Heart left ventricle (tissue), 16 donors: ENCODE measurements at regions of chr9 and their contacts with region 1.

Region 1: GRCh38 chr9:1071730-1072129 is 21.6 kb downstream of the DMRT2 start:
- DNase-seq: no peak
- ATAC-seq: no peak
- H3K4me3 ChIP-seq: no peak overlapping the region
- H3K27ac ChIP-seq: no peak overlapping the region
- H3K4me1 ChIP-seq: no peaks in the 10 kb centered on the region
- H3K27me3 ChIP-seq: peaks cover 0 to 4% (median 0%) of the 10 kb centered on the region in 9 donors
- CTCF ChIP-seq: no peak
- POLR2A ChIP-seq: no peak

Region 2: GRCh38 chr9:1083325-1083913 is 11.7 kb after region 1 on chr9:
- intact Hi-C with region 1: loop called in 1 of 10 experiments (anchors 1 kb)
- DNase-seq: peak in 4 of 5 donors; percentile 18 to 68 (median 26)
- ATAC-seq: peak in 2 of 4 donors; percentile 72 to 76
- H3K4me3 ChIP-seq: peak overlapping the region in 9 of 12 donors; percentile 17 to 49 (median 36)
- H3K27ac ChIP-seq: no peak overlapping the region
- H3K4me1 ChIP-seq: no peaks in the 10 kb centered on the region
- H3K27me3 ChIP-seq: peaks cover 0 to 12% (median 0%) of the 10 kb centered on the region in 9 donors
- CTCF ChIP-seq: no peak
- POLR2A ChIP-seq: no peak